CD4-positive, alpha-beta T cell (primary cell): ENCODE measurements at regions of chr4 and their contacts with region 1.

Region 1: GRCh38 chr4:2220016-2220630 is 21.8 kb downstream of the HAUS3 start:
- DNase-seq: peak; percentile 71 to 88 (median 78)
- ATAC-seq: peak; percentile 98
- H3K4me3 ChIP-seq: no peak overlapping the region
- H3K4me3 Mint-ChIP-seq: no peak overlapping the region
- H3K27ac ChIP-seq: no peak overlapping the region
- H3K27ac Mint-ChIP-seq: no peak overlapping the region
- H3K4me1 ChIP-seq: peaks cover 6% of the 10 kb centered on the region
- H3K4me1 Mint-ChIP-seq: peaks cover 7% of the 10 kb centered on the region
- H3K27me3 ChIP-seq: no peaks in the 10 kb centered on the region
- H3K27me3 Mint-ChIP-seq: no peaks in the 10 kb centered on the region
- CTCF ChIP-seq: peak; percentile 88

Region 2: GRCh38 chr4:2354118-2354517 is 134.0 kb after region 1 on chr4:
- CTCF ChIA-PET with region 1: interaction called, 6 read pairs
- POLR2A ChIA-PET with region 1: no interaction called
- intact Hi-C with region 1: loop called (anchors 1 kb)
- DNase-seq: peak; percentile 14 to 65 (median 29)
- ATAC-seq: peak; percentile 77
- H3K4me3 ChIP-seq: no peak overlapping the region
- H3K4me3 Mint-ChIP-seq: no peak overlapping the region
- H3K27ac ChIP-seq: no peak overlapping the region
- H3K27ac Mint-ChIP-seq: peak overlapping the region; percentile 51
- H3K4me1 ChIP-seq: peaks cover 6% of the 10 kb centered on the region
- H3K4me1 Mint-ChIP-seq: peaks cover 6% of the 10 kb centered on the region
- H3K27me3 ChIP-seq: no peaks in the 10 kb centered on the region
- H3K27me3 Mint-ChIP-seq: no peaks in the 10 kb centered on the region
- CTCF ChIP-seq: peak; percentile 45

Region 3: GRCh38 chr4:2412885-2413716 is 193.0 kb after region 1 on chr4:
- CTCF ChIA-PET with region 1: interaction called, 17 read pairs
- POLR2A ChIA-PET with region 1: interaction called, 6 read pairs
- intact Hi-C with region 1: no loop called
- DNase-seq: peak; percentile 63 to 98 (median 84)
- ATAC-seq: peak; percentile 73
- H3K4me3 ChIP-seq: peak overlapping the region; percentile 52
- H3K4me3 Mint-ChIP-seq: peak overlapping the region; percentile 74
- H3K27ac ChIP-seq: peak overlapping the region; percentile 81 to 96
- H3K27ac Mint-ChIP-seq: peak overlapping the region; percentile 94
- H3K4me1 ChIP-seq: peaks cover 90% of the 10 kb centered on the region
- H3K4me1 Mint-ChIP-seq: peaks cover 72% of the 10 kb centered on the region
- H3K27me3 ChIP-seq: peaks cover 6 to 9% of the 10 kb centered on the region in 2 experiments
- H3K27me3 Mint-ChIP-seq: peaks cover 4% of the 10 kb centered on the region
- CTCF ChIP-seq: no peak

Region 4: DNA sequence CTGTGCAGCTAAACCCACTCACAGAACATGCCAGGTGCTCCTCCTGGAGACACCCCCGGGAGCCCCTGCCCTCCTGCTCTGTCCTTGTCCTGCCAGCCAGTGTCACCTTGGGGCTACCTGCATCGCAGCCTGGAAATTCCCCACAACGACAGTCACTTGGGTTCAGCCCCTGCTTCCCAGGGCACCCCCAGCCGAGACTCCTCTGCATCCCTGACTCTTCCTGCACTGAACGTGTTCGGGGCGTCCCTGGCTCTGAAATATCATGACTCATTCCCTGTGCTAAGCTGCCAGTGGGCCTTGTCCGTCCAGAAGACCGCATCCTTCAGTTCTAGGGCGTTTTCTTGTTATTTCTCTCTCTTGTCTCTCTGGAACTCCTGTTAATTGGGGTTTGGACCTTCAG is 204.5 kb after region 1 on chr4:
- CTCF ChIA-PET with region 1: interaction called, 24 read pairs
- POLR2A ChIA-PET with region 1: interaction called, 6 read pairs
- intact Hi-C with region 1: loop called (anchors 1 to 5 kb)
- DNase-seq: no peak
- ATAC-seq: no peak
- H3K4me3 ChIP-seq: no peak overlapping the region
- H3K4me3 Mint-ChIP-seq: no peak overlapping the region
- H3K27ac ChIP-seq: no peak overlapping the region
- H3K27ac Mint-ChIP-seq: no peak overlapping the region
- H3K4me1 ChIP-seq: peaks cover 5% of the 10 kb centered on the region
- H3K4me1 Mint-ChIP-seq: peaks cover 8% of the 10 kb centered on the region
- H3K27me3 ChIP-seq: peaks cover 0 to 5% of the 10 kb centered on the region in 2 experiments
- H3K27me3 Mint-ChIP-seq: peaks cover 33% of the 10 kb centered on the region
- CTCF ChIP-seq: no peak

Region 5: DNA sequence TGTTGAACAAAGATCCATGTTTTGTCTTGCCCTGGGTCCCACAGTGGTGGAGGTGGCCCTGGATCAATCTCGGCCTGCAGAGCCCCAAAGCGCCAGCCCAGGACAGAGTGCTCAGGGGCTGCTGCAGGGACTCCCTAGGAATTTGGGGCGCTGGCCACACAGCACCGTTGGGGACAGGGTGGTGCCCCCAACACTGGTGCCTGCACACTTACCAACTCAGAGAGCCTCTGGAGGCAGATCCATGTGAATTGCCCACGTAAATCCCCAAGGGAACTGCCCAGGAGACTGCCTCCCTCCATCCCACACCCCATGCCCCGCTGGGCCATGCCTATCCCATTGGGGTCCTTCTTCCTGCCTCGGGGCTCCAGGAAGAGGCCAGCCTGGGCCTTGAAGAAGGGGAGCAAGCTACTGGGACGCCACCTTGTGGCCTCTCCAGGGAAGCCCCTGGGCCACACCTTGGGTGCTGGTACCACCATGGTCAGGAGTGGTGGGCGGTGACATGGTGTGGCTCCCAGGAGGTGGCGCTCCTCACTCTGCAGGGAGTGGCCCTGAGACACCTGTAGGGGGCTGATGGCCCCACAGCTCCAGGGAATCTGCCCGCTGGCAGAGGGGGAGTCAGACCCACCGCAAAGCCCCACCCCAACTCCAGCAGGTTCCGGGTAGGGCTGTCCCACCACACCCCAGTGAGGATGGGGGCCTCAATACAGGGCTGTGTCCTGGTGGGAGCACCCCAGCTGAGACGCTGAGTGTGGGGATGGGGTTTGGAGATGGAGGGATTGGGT is 221.5 kb after region 1 on chr4:
- CTCF ChIA-PET with region 1: interaction called, 23 read pairs
- POLR2A ChIA-PET with region 1: no interaction called
- intact Hi-C with region 1: loop called (anchors 1 kb)
- DNase-seq: peak; percentile 52 to 87 (median 67)
- ATAC-seq: peak; percentile 99
- H3K4me3 ChIP-seq: no peak overlapping the region
- H3K4me3 Mint-ChIP-seq: no peak overlapping the region
- H3K27ac ChIP-seq: no peak overlapping the region
- H3K27ac Mint-ChIP-seq: no peak overlapping the region
- H3K4me1 ChIP-seq: peaks cover 9% of the 10 kb centered on the region
- H3K4me1 Mint-ChIP-seq: no peaks in the 10 kb centered on the region
- H3K27me3 ChIP-seq: no peaks in the 10 kb centered on the region
- H3K27me3 Mint-ChIP-seq: no peaks in the 10 kb centered on the region
- CTCF ChIP-seq: peak; percentile 69

Region 6: GRCh38 chr4:2462218-2462991 is 242.3 kb after region 1 on chr4:
- CTCF ChIA-PET with region 1: interaction called, 8 read pairs
- POLR2A ChIA-PET with region 1: interaction called, 13 read pairs
- intact Hi-C with region 1: loop called in 1 of 2 experiments (anchors 2 kb)
- DNase-seq: peak; percentile 40 to 89 (median 60)
- ATAC-seq: peak; percentile 98
- H3K4me3 ChIP-seq: no peak overlapping the region
- H3K4me3 Mint-ChIP-seq: peak overlapping the region; percentile 85
- H3K27ac ChIP-seq: no peak overlapping the region
- H3K27ac Mint-ChIP-seq: no peak overlapping the region
- H3K4me1 ChIP-seq: peaks cover 18% of the 10 kb centered on the region
- H3K4me1 Mint-ChIP-seq: peaks cover 12% of the 10 kb centered on the region
- H3K27me3 ChIP-seq: peaks cover 0 to 5% of the 10 kb centered on the region in 2 experiments
- H3K27me3 Mint-ChIP-seq: no peaks in the 10 kb centered on the region
- CTCF ChIP-seq: peak; percentile 46

Region 7: DNA sequence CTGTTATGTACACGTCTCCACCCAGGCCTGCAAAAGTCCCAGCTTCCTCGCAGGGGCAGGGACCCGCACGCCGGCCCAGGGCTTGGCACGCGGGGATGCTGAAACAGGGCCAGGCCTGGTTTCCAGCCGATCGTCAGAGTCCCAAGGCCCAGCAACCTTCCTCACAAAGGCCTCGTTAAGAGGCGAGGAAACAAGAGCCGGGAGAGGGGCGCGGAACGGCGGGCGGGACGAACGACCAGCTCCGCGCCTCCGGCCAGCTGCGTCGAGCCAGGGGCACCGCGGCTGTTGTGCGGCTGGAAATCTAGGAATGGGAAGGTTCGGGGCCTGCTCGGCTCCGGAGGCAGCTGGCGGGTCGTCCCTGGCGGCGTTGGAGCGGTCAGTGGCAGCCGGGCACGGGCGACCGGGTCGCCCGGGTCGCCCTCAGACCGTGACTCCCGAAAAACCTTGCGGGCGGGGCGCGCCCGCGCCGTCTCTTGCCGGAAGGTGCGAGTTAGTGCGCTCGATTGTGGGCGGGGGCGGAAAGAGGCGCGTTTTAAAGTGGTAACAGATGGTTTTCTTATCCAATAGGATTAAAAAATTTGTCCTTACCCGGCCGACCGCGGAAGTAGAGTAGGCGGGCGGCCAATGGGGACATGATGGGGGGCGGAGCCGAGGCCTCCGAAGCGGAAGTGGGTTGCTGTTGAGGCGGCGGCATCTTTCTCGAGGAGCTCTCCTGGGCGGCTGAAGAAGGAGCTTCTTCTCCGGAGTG is 248.5 kb after region 1 on chr4 and contains the start of gene RNF4:
- CTCF ChIA-PET with region 1: interaction called, 5 read pairs
- POLR2A ChIA-PET with region 1: interaction called, 13 read pairs
- intact Hi-C with region 1: loop called (anchors 2 kb)
- DNase-seq: peak; percentile 89 to 98 (median 94)
- ATAC-seq: peak; percentile 84
- H3K4me3 ChIP-seq: peak within 1 kb of the TSS; percentile 98
- H3K4me3 Mint-ChIP-seq: peak within 1 kb of the TSS; percentile 94
- H3K27ac ChIP-seq: peak within 1 kb of the TSS; percentile 96 to 97
- H3K27ac Mint-ChIP-seq: peak within 1 kb of the TSS; percentile 94
- H3K4me1 ChIP-seq: peaks cover 48% of the 10 kb centered on the region
- H3K4me1 Mint-ChIP-seq: peaks cover 48% of the 10 kb centered on the region
- H3K27me3 ChIP-seq: no peaks in the 10 kb centered on the region
- H3K27me3 Mint-ChIP-seq: no peaks in the 10 kb centered on the region
- CTCF ChIP-seq: no peak
- total RNA-seq, gene RNF4: 106 to 109 TPM